Naive thymus-derived CD8-positive, alpha-beta T cell (primary cell): ENCODE measurements at regions of chr6 and their contacts with region 1.

Region 1: GRCh38 chr6:29632789-29633533 is at the start of gene GABBR1:
- DNase-seq: peak; percentile 41 to 76 (median 63)
- ATAC-seq: peak; percentile 73 to 77
- H3K4me3 Mint-ChIP-seq: peak within 1 kb of the TSS; percentile 82 to 95 (median 90)
- H3K27ac Mint-ChIP-seq: peak within 1 kb of the TSS; percentile 32 to 94 (median 87)
- H3K4me1 Mint-ChIP-seq: peaks cover 29 to 65% (median 52%) of the 10 kb centered on the region in 4 donors
- H3K27me3 Mint-ChIP-seq: peaks cover 0 to 3% (median 0%) of the 10 kb centered on the region in 5 donors
- polyA plus RNA-seq, gene GABBR1: 0.46 to 0.92 (median 0.64) TPM

Region 2: DNA sequence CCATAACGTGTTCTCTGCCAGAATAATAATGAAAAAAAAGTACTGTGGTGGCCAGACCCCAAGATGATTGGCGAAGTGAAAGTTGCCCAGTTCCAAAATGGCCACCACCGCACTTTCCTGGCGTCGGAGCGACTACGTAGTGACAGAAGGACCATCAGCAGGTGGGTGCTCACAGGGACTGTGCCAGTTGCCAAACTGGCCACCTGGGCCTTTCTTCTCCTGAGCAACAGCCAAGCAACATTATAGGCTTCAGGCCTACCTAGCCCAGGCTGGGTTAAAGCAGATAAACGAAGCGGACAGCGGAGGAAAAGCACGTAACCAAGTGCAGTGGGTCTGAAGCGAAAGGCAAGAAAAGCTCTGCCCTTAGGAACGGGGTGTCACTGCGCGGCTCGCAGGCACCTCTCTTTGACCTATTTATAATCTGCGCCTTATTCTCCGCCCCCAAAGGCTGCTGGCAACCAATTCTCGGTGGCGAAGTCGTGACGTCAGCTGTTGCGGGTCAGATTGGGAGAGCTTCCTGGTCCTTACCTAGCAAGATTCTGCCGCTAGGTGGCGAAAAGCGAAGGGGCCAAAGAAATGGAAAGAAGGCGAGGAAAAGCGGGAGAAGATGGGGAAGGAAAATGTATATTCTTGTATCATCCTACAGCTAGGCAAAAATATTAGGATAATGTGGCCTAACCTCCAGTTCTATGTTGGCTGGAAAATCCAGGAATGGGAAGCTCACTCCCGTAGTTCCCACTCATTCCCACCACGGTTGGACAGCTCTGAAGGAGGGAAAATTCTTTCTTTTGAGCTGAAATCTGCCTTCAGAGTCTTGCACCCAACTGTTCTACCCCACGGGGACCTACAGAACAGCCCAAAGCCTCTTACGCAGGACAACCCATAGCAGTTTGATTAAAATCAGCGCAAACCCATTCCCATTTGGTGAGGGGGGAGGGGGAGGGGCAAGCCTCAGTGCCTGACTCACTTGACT is 17.0 kb after region 1 on chr6:
- POLR2A ChIA-PET with region 1: interaction called, 15 read pairs
- DNase-seq: peak; percentile 88 to 99 (median 98)
- ATAC-seq: peak; percentile 94 to 96
- H3K4me3 Mint-ChIP-seq: peak overlapping the region; percentile 96 to 99 (median 99)
- H3K27ac Mint-ChIP-seq: peak overlapping the region; percentile 97 to 100 (median 100)
- H3K4me1 Mint-ChIP-seq: peaks cover 6 to 22% (median 17%) of the 10 kb centered on the region in 4 donors
- H3K27me3 Mint-ChIP-seq: peaks cover 1 to 5% (median 3%) of the 10 kb centered on the region in 5 donors

Region 3: DNA sequence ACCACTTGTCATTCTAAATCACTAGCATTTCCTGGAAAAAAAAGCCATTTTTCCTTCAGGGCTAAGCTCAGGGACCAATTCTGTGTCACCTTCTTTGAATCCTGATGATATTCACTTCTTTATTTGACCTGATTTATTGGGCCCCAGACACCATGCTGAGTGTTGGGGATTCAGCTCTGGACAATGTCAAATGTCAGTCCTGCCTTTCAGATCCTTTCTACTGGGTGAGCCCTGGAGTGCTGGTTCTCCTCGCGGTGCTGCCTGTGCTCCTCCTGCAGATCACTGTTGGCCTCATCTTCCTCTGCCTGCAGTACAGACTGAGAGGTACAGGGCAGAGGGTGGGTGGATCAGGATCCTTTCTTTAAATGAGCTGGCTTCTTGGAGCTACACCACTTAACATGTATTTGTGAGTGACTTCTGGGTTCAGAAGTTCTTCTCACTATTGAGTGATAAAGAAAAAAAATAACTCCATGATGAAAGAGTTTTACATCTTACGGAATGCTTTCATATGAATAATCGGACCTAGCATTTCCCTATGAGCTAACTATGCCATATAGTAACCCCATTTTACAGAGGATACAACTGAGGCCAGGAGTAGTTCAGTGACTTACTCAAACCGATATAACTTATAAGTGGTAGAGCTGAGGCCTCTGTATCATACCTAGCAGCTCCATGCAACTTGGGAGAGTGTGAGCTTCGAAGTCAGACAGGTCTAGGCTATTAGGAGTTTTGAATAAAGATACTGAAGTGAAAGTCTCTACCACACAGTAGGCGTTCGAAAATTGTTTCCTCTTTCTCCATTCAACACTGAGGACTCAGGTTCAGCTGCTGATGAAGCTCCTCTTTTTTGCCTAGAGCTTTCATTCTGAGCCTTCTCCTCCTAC is 33.2 kb after region 1 on chr6:
- POLR2A ChIA-PET with region 1: no interaction called
- DNase-seq: no peak
- ATAC-seq: no peak
- H3K4me3 Mint-ChIP-seq: no peak overlapping the region
- H3K27ac Mint-ChIP-seq: peak overlapping the region in 1 of 10 donors; percentile 41
- H3K4me1 Mint-ChIP-seq: no peaks in the 10 kb centered on the region
- H3K27me3 Mint-ChIP-seq: peaks cover 10 to 47% (median 22%) of the 10 kb centered on the region in 5 donors

Region 4: GRCh38 chr6:29685718-29686326 is 52.9 kb after region 1 on chr6:
- POLR2A ChIA-PET with region 1: no interaction called
- DNase-seq: no peak
- ATAC-seq: no peak
- H3K4me3 Mint-ChIP-seq: no peak overlapping the region
- H3K27ac Mint-ChIP-seq: no peak overlapping the region
- H3K4me1 Mint-ChIP-seq: peaks cover 0 to 3% (median 0%) of the 10 kb centered on the region in 4 donors
- H3K27me3 Mint-ChIP-seq: peaks cover 0 to 9% (median 0%) of the 10 kb centered on the region in 5 donors